GM10248 (cell line): ENCODE measurements at regions of chr1 and their contacts with region 1.

Region 1: DNA sequence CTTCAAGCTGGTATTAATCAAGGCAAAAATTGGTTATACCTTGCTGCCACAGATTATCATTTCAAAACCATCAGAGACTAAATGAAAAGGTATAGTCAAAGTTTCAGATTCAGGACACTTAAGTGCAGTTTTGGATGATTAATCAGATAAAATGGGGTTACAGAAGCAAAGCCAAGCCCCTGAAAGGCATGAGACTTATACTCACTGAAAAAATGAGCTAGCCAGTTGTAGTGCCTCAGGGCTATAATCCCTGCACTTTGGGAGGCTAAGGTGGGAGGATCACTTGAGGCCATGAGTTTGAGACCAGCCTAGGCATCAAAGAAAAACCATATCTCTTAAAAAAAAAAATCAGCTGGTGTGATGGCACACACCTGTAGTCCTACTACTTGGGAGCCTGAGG is 15.2 kb downstream of the LRRC40 start:
- DNase-seq: no peak
- CTCF ChIP-seq: no peak

Region 2: DNA sequence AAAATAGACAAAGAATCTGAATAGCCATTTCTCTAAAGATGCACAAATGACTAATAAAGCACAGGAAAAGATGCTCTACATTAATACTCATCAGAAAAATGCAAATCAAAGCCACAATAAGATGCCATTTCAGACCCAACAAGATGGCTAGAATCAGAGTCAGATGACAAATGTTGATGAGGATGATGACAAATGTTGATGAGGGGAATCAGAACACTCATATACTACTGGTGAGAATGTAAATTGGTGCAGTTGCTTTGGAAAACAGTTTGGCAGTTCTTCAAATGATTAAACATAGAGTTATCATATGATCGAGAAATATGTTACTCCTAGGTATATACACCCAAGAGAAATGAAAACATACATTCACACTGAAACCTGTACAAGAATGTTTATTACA is 18.7 kb before region 1 on chr1:
- CTCF ChIA-PET with region 1: interaction called, 10 read pairs
- POLR2A ChIA-PET with region 1: no interaction called
- DNase-seq: no peak
- CTCF ChIP-seq: no peak